ENCODE measurements at regions of chr3 and their contacts with region 1.

Region 1: GRCh38 chr3:114375608-114376421 is 82.0 kb downstream of the TIGIT start:
- DNase-seq: no peak
- H3K4me3 ChIP-seq: no peak overlapping the region
- H3K27ac ChIP-seq: no peak overlapping the region
- H3K4me1 ChIP-seq: no peaks in the 10 kb centered on the region
- H3K27me3 ChIP-seq: no peaks in the 10 kb centered on the region

Region 2: GRCh38 chr3:114336122-114336697 is 39.6 kb before region 1 on chr3:
- CTCF ChIA-PET with region 1: no interaction called
- POLR2A ChIA-PET with region 1: no interaction called
- DNase-seq: peak; percentile 2 to 5 (median 4)
- H3K4me3 ChIP-seq: no peak overlapping the region
- H3K27ac ChIP-seq: no peak overlapping the region
- H3K4me1 ChIP-seq: no peaks in the 10 kb centered on the region
- H3K27me3 ChIP-seq: no peaks in the 10 kb centered on the region

Region 3: GRCh38 chr3:114363554-114364202 is 12.1 kb before region 1 on chr3:
- CTCF ChIA-PET with region 1: interaction called, 11 read pairs
- POLR2A ChIA-PET with region 1: no interaction called
- DNase-seq: no peak
- H3K4me3 ChIP-seq: no peak overlapping the region
- H3K27ac ChIP-seq: no peak overlapping the region
- H3K4me1 ChIP-seq: no peaks in the 10 kb centered on the region
- H3K27me3 ChIP-seq: no peaks in the 10 kb centered on the region

Region 4: DNA sequence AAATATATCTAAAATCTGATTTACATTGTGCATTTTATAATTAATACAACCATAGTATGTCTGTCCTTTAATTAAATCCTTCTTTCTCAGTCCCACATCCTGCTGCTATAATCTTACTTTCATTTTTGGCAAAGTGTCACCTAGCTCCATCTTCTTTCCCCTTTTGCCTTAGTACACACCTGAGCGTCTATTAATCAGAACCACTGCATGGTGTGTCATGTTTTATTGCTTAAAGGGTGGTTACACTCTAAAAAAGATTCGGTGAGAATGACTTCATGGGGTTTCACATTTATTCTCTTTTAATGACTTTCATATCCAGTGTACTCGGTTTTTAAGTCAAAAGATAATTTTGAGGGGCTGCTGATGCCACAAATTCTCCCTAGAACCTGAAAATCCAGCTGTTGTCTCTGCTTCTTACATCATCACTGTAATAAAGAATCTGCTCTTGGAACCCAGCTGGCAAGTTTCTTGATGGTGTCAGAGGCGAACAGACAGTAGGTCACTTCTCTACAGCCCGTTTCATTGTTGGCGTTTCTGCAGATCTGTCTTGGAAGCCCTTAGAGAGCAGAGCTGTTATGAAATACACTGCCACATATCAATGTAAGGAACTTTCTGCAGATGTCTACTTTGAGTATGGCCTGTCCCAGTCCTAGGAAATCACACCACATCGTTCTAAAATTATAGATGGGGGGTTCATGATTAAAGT is 17.7 kb after region 1 on chr3:
- CTCF ChIA-PET with region 1: no interaction called
- POLR2A ChIA-PET with region 1: no interaction called
- DNase-seq: peak in 1 of 3 donors; percentile 2
- H3K4me3 ChIP-seq: no peak overlapping the region
- H3K27ac ChIP-seq: no peak overlapping the region
- H3K4me1 ChIP-seq: no peaks in the 10 kb centered on the region
- H3K27me3 ChIP-seq: no peaks in the 10 kb centered on the region